Mammary epithelial cell (primary cell): ENCODE measurements at regions of chr6 and their contacts with region 1.

Region 1: GRCh38 chr6:118800394-118801071 is 93.4 kb upstream of the ASF1A start:
- DNase-seq: peak; percentile 70
- H3K4me3 ChIP-seq: no peak overlapping the region
- H3K27ac ChIP-seq: no peak overlapping the region
- H3K4me1 ChIP-seq: peaks cover 6% of the 10 kb centered on the region
- H3K27me3 ChIP-seq: no peaks in the 10 kb centered on the region
- CTCF ChIP-seq: peak; percentile 91 to 98

Region 2: GRCh38 chr6:118565311-118565960 is 235.1 kb before region 1 on chr6:
- CTCF ChIA-PET with region 1: interaction called, 4 read pairs
- dilution Hi-C with region 1: no loop called
- in situ Hi-C with region 1: no loop called
- intact Hi-C with region 1: loop called (anchors 1 kb)
- DNase-seq: peak; percentile 54
- H3K4me3 ChIP-seq: no peak overlapping the region
- H3K27ac ChIP-seq: no peak overlapping the region
- H3K4me1 ChIP-seq: no peaks in the 10 kb centered on the region
- H3K27me3 ChIP-seq: no peaks in the 10 kb centered on the region
- CTCF ChIP-seq: peak; percentile 48 to 61

Region 3: GRCh38 chr6:118618679-118619377 is 181.7 kb before region 1 on chr6:
- CTCF ChIA-PET with region 1: no interaction called
- dilution Hi-C with region 1: no loop called
- in situ Hi-C with region 1: no loop called
- intact Hi-C with region 1: loop called (anchors 2 kb)
- DNase-seq: peak; percentile 8
- H3K4me3 ChIP-seq: no peak overlapping the region
- H3K27ac ChIP-seq: no peak overlapping the region
- H3K4me1 ChIP-seq: no peaks in the 10 kb centered on the region
- H3K27me3 ChIP-seq: no peaks in the 10 kb centered on the region
- CTCF ChIP-seq: peak; percentile 90 to 93

Region 4: DNA sequence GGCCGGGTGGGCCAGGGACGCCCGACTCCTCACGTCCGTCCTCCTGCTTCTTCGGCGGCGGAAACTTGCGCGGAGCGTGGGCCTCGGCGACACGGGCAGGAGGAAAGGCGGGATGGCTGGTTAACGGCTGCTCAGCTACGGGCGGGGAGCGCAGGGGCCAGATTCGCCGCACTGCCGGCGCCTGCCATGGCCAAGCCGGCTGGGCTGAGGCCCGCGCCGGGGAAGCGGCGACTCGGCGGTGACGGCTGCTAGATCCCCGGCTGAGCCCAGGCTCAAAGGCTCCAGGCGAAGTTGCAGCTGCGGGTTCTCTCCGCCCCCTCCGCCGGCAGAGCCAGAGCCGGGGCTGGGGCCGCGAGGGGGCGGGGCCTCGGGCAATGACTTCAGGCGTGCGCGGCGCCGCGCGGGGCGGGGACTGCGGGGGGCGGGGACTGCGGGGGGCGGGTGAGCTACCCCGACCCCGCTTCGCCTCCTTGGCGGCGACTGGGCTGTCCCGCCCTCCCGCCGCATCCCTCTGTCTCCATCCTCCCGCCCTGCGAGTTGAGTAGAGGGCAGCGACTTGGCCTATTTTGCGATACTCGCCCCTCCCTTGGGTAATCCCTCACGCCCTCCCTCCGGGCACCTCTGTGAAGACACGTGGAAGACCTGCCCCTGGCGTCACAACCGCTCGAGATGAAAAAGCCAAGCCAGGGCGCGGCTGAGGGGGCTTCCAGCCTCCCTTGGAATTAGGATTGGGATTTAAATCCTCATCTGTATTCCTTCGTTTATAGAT is 149.1 kb before region 1 on chr6 and contains the start of gene CEP85L:
- CTCF ChIA-PET with region 1: interaction called, 3 read pairs
- dilution Hi-C with region 1: no loop called
- in situ Hi-C with region 1: loop called in 1 of 2 experiments (anchors 25 kb)
- intact Hi-C with region 1: loop called (anchors 1 kb)
- DNase-seq: peak; percentile 88
- H3K4me3 ChIP-seq: peak within 1 kb of the TSS; percentile 67 to 93 (median 84)
- H3K27ac ChIP-seq: peak within 1 kb of the TSS; percentile 82
- H3K4me1 ChIP-seq: no peaks in the 10 kb centered on the region
- H3K27me3 ChIP-seq: no peaks in the 10 kb centered on the region
- CTCF ChIP-seq: no peak
- total RNA-seq, gene CEP85L: 10.6 to 23.3 TPM

Region 5: DNA sequence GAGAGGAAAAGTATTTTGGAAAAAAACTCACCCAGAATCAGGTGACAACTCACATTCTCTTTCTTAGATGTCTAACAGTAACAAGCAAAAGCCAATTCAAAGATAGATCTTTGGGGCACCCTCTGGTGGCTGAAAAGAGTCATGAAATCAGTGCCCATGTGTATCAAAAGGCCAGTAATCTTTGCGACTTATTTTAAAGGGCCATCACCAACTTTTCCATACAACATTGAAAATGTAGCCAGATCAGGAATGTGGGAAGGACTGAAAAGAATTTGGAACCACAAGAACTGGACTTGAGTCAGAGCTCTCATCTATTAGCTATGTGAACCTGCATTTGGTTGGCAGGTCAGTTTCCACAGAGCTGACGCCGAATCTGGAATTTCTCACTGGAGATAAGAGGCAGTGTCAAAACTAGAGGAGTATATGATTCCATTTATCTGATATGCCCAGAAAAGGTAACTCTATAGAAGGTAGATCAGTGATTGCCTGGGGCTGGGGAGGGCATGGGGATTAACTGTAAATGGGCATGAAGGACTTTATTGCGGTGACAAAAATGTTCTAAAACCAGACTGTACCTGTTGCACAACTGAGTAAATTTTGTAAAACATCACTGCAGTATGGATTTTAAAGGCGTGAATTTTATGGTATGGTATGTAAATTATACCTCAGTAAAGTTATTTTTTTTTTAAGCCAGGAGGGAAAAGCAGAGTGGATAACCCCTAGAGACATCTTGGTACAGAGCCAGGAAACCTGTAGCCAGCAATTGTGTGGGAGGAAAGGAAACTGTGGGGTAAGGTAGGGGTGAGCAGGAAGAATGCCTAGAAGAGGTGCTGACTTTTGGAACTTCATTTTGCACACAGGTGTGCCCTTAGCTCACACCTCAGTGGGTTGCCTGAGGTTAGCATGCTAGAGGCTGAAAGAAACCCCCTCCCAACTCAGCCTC is 23.7 kb before region 1 on chr6:
- CTCF ChIA-PET with region 1: no interaction called
- dilution Hi-C with region 1: no loop called
- in situ Hi-C with region 1: no loop called
- intact Hi-C with region 1: loop called (anchors 2 kb)
- DNase-seq: peak; percentile 88
- H3K4me3 ChIP-seq: peak overlapping the region in 2 of 3 experiments; percentile 10 to 23
- H3K27ac ChIP-seq: no peak overlapping the region
- H3K4me1 ChIP-seq: peaks cover 27% of the 10 kb centered on the region
- H3K27me3 ChIP-seq: no peaks in the 10 kb centered on the region
- CTCF ChIP-seq: peak; percentile 82 to 83

Region 6: GRCh38 chr6:118893807-118894424 is 93.4 kb after region 1 on chr6 and contains the start of gene ASF1A:
- CTCF ChIA-PET with region 1: no interaction called
- dilution Hi-C with region 1: no loop called
- in situ Hi-C with region 1: no loop called
- intact Hi-C with region 1: loop called (anchors 1 kb)
- DNase-seq: peak; percentile 98
- H3K4me3 ChIP-seq: peak within 1 kb of the TSS; percentile 82 to 99 (median 97)
- H3K27ac ChIP-seq: peak within 1 kb of the TSS; percentile 89
- H3K4me1 ChIP-seq: peaks cover 22% of the 10 kb centered on the region
- H3K27me3 ChIP-seq: no peaks in the 10 kb centered on the region
- CTCF ChIP-seq: peak; percentile 50 to 74
- total RNA-seq, gene ASF1A: 19.8 to 29.0 TPM

Region 7: GRCh38 chr6:119110601-119111548 is 310.3 kb after region 1 on chr6:
- CTCF ChIA-PET with region 1: no interaction called
- dilution Hi-C with region 1: no loop called
- in situ Hi-C with region 1: no loop called
- intact Hi-C with region 1: loop called (anchors 1 kb)
- DNase-seq: peak; percentile 41
- H3K4me3 ChIP-seq: no peak overlapping the region
- H3K27ac ChIP-seq: no peak overlapping the region
- H3K4me1 ChIP-seq: no peaks in the 10 kb centered on the region
- H3K27me3 ChIP-seq: no peaks in the 10 kb centered on the region
- CTCF ChIP-seq: peak; percentile 53 to 64